ENCODE measurements at regions of chr1 and their contacts with region 1.

Region 1: GRCh38 chr1:207828485-207829158 is 76.8 kb downstream of the CD46 start:
- DNase-seq: peak; percentile 87
- ATAC-seq: peak; percentile 59

Region 2: GRCh38 chr1:207963427-207964194 is 135.0 kb after region 1 on chr1:
- intact Hi-C with region 1: loop called (anchors 5 kb)
- DNase-seq: peak; percentile 97
- ATAC-seq: peak; percentile 75

Measured in Right ventricle myocardium inferior (tissue), 1 donor.